OCI-LY7 (cell line): ENCODE measurements at regions of chr11 and their contacts with region 1.

Region 1: DNA sequence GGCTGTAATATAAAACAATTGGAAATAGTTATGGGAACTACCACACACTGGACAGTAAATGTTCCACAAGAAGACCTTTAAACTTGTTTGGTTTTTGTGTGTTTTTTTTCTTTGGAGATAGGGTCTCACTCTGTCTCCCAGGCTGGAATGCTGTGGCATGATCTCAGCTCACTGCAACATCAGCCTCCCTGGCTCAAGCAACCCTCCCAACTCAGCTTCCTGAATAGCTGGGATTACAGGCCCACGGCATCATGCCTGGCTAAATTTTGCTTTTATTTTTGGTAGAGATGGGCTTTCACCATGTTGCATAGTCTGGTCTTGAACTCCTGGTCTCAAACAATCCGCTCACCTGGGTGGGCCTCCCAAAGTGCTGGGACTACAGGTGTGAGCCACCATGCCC is 121.0 kb downstream of the MPPED2 start:
- DNase-seq: no peak
- H3K4me3 ChIP-seq: no peak overlapping the region
- H3K27ac ChIP-seq: no peak overlapping the region
- H3K4me1 ChIP-seq: no peaks in the 10 kb centered on the region
- CTCF ChIP-seq: no peak

Region 2: DNA sequence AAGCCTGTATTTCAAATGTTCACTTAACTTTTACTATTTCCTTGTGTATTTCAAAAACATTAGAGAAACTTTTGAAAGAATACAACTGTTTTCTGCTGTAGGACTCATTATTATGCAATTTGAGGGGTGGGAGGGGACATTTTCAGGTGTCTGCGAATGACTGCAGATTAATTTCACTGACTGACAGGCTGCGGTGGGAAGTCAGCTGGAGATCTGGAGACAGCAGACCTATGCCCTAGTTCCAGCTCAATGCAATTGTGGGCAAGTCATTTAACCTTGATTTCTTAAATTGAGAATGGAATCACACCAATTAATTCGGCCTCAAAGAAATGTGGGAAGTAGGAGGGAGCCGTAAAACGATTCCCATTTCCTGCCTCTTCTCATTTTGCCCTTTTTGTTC is 13.6 kb before region 1 on chr11:
- CTCF ChIA-PET with region 1: no interaction called
- POLR2A ChIA-PET with region 1: no interaction called
- intact Hi-C with region 1: loop called (anchors 1 kb)
- DNase-seq: no peak
- H3K4me3 ChIP-seq: no peak overlapping the region
- H3K27ac ChIP-seq: no peak overlapping the region
- H3K4me1 ChIP-seq: no peaks in the 10 kb centered on the region
- CTCF ChIP-seq: no peak

Region 3: DNA sequence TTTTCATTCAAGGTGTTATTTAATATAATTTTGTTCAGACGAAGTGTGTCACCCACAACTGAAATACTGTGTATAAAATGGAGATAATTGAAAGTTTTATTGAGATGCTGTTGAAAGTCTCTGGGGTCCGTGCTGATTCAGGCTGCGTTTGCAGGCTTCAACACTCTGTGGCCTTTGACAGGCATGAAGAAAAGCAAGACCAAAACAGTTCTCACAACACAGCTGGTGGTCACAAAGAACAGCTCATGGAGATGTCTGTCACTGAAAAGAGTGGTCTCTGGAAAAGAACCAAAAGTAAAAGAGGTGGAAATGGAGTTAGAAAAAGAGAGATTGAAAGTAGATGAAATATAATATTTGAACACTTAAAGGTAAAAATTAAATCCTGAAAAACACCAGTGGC is 130.7 kb after region 1 on chr11:
- CTCF ChIA-PET with region 1: no interaction called
- POLR2A ChIA-PET with region 1: no interaction called
- intact Hi-C with region 1: no loop called
- DNase-seq: no peak
- H3K4me3 ChIP-seq: no peak overlapping the region
- H3K27ac ChIP-seq: no peak overlapping the region
- H3K4me1 ChIP-seq: no peaks in the 10 kb centered on the region
- CTCF ChIP-seq: no peak